Endothelial cell of umbilical vein (primary cell): ENCODE measurements at regions of chr9 and their contacts with region 1.

Region 1: DNA sequence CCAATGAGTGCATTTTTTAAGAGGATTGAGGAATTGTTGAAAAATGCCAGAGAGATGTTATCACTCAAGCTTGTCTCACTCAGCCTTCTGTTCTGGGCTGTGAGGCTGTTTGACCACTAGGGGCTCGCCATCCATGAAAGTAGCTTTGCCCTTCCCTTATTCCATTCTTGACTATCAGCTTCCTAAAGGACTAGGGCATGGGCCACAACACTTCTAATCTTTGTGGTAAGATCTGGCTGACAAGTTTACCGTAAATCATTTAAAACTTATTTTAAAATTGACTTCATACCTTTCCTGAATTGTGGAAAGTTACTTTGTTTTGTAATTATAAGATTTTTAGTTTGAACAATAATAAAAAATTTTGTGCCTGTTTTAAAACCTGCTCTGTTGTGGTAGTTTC is 49.5 kb downstream of the TJP2 start:
- DNase-seq: peak; percentile 74
- H3K4me3 ChIP-seq: no peak overlapping the region
- H3K27ac ChIP-seq: no peak overlapping the region
- H3K4me1 ChIP-seq: no peaks in the 10 kb centered on the region
- H3K27me3 ChIP-seq: no peaks in the 10 kb centered on the region
- CTCF ChIP-seq: peak; percentile 85
- POLR2A ChIP-seq: no peak

Region 2: GRCh38 chr9:68832853-68833518 is 390.6 kb before region 1 on chr9:
- CTCF ChIA-PET with region 1: no interaction called
- POLR2A ChIA-PET with region 1: no interaction called
- dilution Hi-C with region 1: no loop called
- intact Hi-C with region 1: no loop called
- DNase-seq: no peak
- H3K4me3 ChIP-seq: no peak overlapping the region
- H3K27ac ChIP-seq: no peak overlapping the region
- H3K4me1 ChIP-seq: no peaks in the 10 kb centered on the region
- H3K27me3 ChIP-seq: no peaks in the 10 kb centered on the region
- CTCF ChIP-seq: no peak
- POLR2A ChIP-seq: no peak

Region 3: GRCh38 chr9:68951879-68952659 is 271.5 kb before region 1 on chr9:
- CTCF ChIA-PET with region 1: no interaction called
- POLR2A ChIA-PET with region 1: no interaction called
- dilution Hi-C with region 1: no loop called
- intact Hi-C with region 1: no loop called
- DNase-seq: no peak
- H3K4me3 ChIP-seq: no peak overlapping the region
- H3K27ac ChIP-seq: no peak overlapping the region
- H3K4me1 ChIP-seq: no peaks in the 10 kb centered on the region
- H3K27me3 ChIP-seq: no peaks in the 10 kb centered on the region
- CTCF ChIP-seq: no peak
- POLR2A ChIP-seq: no peak

Region 4: GRCh38 chr9:69035438-69036308 is 187.9 kb before region 1 on chr9 and contains the start of gene FXN:
- CTCF ChIA-PET with region 1: interaction called, 15 read pairs
- POLR2A ChIA-PET with region 1: no interaction called
- dilution Hi-C with region 1: no loop called
- intact Hi-C with region 1: no loop called
- DNase-seq: peak; percentile 85
- H3K4me3 ChIP-seq: peak within 1 kb of the TSS; percentile 44 to 81 (median 67)
- H3K27ac ChIP-seq: peak within 1 kb of the TSS; percentile 31
- H3K4me1 ChIP-seq: peaks cover 18% of the 10 kb centered on the region
- H3K27me3 ChIP-seq: no peaks in the 10 kb centered on the region
- CTCF ChIP-seq: peak; percentile 99 to 100
- POLR2A ChIP-seq: peak; percentile 52
- total RNA-seq, gene FXN: 17.1 and 21.2 TPM in 2 replicates

Region 5: DNA sequence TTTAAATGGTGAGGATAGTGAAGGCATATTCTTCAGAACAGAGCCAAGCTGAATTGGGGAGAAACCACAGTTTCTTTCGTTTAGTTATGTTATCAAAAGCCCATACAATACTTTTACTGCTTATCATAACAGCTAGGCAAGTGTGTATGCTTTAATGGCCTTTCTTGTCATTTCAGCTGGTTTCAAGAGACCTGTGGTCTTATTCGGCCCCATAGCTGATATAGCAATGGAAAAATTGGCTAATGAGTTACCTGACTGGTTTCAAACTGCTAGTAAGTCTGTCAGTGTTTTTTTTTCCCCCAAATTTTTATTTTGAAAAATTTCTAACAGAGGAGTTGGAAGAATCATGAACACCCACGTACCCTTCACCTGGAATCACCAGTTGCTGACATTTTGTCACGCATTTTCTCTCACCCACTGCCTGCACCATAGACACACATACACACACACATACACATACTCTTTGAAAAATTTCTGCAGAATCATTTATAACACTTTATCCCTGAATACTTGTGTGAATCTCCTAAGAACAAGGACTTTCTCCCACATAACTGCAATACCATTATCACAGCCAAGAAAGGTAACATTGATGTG is 14.2 kb after region 1 on chr9:
- CTCF ChIA-PET with region 1: interaction called, 19 read pairs
- POLR2A ChIA-PET with region 1: no interaction called
- dilution Hi-C with region 1: no loop called
- intact Hi-C with region 1: no loop called
- DNase-seq: no peak
- H3K4me3 ChIP-seq: no peak overlapping the region
- H3K27ac ChIP-seq: no peak overlapping the region
- H3K4me1 ChIP-seq: no peaks in the 10 kb centered on the region
- H3K27me3 ChIP-seq: no peaks in the 10 kb centered on the region
- CTCF ChIP-seq: no peak
- POLR2A ChIP-seq: no peak

Region 6: GRCh38 chr9:69243116-69243515 is 19.5 kb after region 1 on chr9:
- CTCF ChIA-PET with region 1: interaction called, 19 read pairs
- POLR2A ChIA-PET with region 1: no interaction called
- dilution Hi-C with region 1: no loop called
- intact Hi-C with region 1: no loop called
- DNase-seq: no peak
- H3K4me3 ChIP-seq: no peak overlapping the region
- H3K27ac ChIP-seq: no peak overlapping the region
- H3K4me1 ChIP-seq: no peaks in the 10 kb centered on the region
- H3K27me3 ChIP-seq: no peaks in the 10 kb centered on the region
- CTCF ChIP-seq: no peak
- POLR2A ChIP-seq: no peak

Region 7: DNA sequence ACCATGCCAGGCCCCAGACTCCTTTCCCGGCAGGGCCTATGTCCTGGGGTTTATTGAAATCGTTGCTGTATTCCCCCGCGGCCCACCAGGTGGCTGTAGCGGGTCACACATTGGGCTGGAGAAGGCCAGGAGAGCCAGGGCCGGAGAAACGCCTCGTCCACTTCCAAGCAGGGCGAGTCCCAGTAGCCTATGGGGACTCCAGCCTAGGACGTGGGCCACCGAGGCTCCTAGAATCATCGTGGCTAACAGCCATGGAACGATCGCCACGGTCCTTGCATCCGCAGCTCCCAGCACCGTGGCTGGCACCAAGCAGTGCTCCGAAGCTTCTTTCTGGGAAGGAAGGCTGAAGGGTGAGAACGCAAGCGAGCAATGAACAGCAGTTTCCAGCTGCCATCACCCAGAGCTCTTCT is 189.1 kb after region 1 on chr9:
- CTCF ChIA-PET with region 1: interaction called, 4 read pairs
- POLR2A ChIA-PET with region 1: no interaction called
- dilution Hi-C with region 1: no loop called
- intact Hi-C with region 1: loop called (anchors 2 kb)
- DNase-seq: peak; percentile 74
- H3K4me3 ChIP-seq: no peak overlapping the region
- H3K27ac ChIP-seq: no peak overlapping the region
- H3K4me1 ChIP-seq: no peaks in the 10 kb centered on the region
- H3K27me3 ChIP-seq: no peaks in the 10 kb centered on the region
- CTCF ChIP-seq: peak; percentile 79 to 81
- POLR2A ChIP-seq: no peak

Region 8: GRCh38 chr9:69564557-69564956 is 341.0 kb after region 1 on chr9:
- CTCF ChIA-PET with region 1: no interaction called
- POLR2A ChIA-PET with region 1: no interaction called
- dilution Hi-C with region 1: no loop called
- intact Hi-C with region 1: no loop called
- DNase-seq: no peak
- H3K4me3 ChIP-seq: no peak overlapping the region
- H3K27ac ChIP-seq: no peak overlapping the region
- H3K4me1 ChIP-seq: no peaks in the 10 kb centered on the region
- H3K27me3 ChIP-seq: no peaks in the 10 kb centered on the region
- CTCF ChIP-seq: no peak
- POLR2A ChIP-seq: no peak